ENCODE measurements at regions of chr7 and their contacts with region 1.

Region 1: GRCh38 chr7:30740424-30741181 is 11.3 kb upstream of the INMT start:
- DNase-seq: peak; percentile 85
- H3K4me3 ChIP-seq: no peak overlapping the region
- H3K27ac ChIP-seq: no peak overlapping the region
- H3K4me1 ChIP-seq: peaks cover 13% of the 10 kb centered on the region
- H3K27me3 ChIP-seq: no peaks in the 10 kb centered on the region
- CTCF ChIP-seq: peak; percentile 87 to 97 (median 92)
- POLR2A ChIP-seq: no peak

Region 2: GRCh38 chr7:30616318-30616717 is 124.3 kb before region 1 on chr7:
- intact Hi-C with region 1: no loop called
- DNase-seq: no peak
- H3K4me3 ChIP-seq: no peak overlapping the region
- H3K27ac ChIP-seq: no peak overlapping the region
- H3K4me1 ChIP-seq: no peaks in the 10 kb centered on the region
- H3K27me3 ChIP-seq: no peaks in the 10 kb centered on the region
- CTCF ChIP-seq: no peak
- POLR2A ChIP-seq: no peak

Region 3: GRCh38 chr7:30682212-30683083 is 58.2 kb before region 1 on chr7 and contains the start of gene CRHR2:
- intact Hi-C with region 1: loop called (anchors 10 kb)
- DNase-seq: peak; percentile 25
- H3K4me3 ChIP-seq: peak within 1 kb of the TSS; percentile 40 to 51
- H3K27ac ChIP-seq: no peak within 1 kb of the TSS
- H3K4me1 ChIP-seq: peaks cover 10% of the 10 kb centered on the region
- H3K27me3 ChIP-seq: no peaks in the 10 kb centered on the region
- CTCF ChIP-seq: peak in 1 of 3 experiments; percentile 12
- POLR2A ChIP-seq: no peak
- total RNA-seq, gene CRHR2: 0.50 to 1.2 TPM